ENCODE measurements at regions of chr5 and their contacts with region 1.

Region 1: DNA sequence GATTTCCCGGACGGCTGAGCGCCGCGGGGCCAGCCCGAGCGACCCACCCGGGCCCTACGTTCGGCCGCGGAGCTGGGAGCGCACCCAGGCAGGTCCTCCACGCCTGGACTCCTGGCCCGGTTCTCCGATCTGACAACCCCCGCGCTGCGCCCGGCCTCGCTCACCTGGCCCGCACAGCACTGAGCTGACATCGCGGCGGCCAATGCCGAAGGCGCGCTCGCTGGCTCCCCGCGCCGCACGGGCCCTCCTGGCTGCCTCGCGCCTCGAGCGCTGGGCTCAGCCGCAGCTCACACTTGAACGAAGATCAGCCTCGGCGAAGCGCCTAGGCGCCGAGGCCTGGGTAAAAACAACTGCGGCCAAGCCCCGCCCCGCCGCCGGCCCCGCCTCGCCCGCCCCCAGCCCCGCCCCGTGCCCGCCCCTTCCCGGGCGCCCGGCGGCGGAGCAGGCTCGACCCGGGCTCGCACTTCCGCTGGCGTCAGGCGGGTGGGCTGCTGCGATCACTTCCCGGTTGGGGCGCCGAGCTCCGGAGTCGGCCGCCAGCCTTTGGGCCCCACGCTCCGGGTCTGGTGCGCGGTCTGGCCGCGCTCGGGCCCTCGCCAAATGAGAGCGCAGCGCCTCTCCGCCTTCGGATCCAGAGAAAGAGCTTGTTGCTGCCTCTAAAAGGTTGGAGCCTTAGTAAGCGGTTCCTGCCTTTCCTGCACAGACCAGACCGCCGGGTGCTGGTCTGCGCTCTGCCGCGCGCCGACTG is at the start of gene SERINC5:
- DNase-seq: peak; percentile 79 to 89 (median 86)
- ATAC-seq: peak; percentile 91
- H3K4me3 ChIP-seq: peak within 1 kb of the TSS; percentile 73
- H3K4me3 Mint-ChIP-seq: peak within 1 kb of the TSS; percentile 92 to 99 (median 96)
- H3K27ac ChIP-seq: peak within 1 kb of the TSS; percentile 88
- H3K27ac Mint-ChIP-seq: peak within 1 kb of the TSS; percentile 94 to 99 (median 98)
- H3K4me1 ChIP-seq: peaks cover 19 to 30% of the 10 kb centered on the region in 2 donors
- H3K4me1 Mint-ChIP-seq: peaks cover 40 to 56% (median 46%) of the 10 kb centered on the region in 7 donors
- H3K27me3 ChIP-seq: no peaks in the 10 kb centered on the region
- H3K27me3 Mint-ChIP-seq: no peaks in the 10 kb centered on the region
- total RNA-seq, gene SERINC5: 71.2 to 164 (median 163) TPM

Region 2: GRCh38 chr5:78547731-78548615 is 1707.9 kb before region 1 on chr5:
- CTCF ChIA-PET with region 1: no interaction called
- POLR2A ChIA-PET with region 1: no interaction called
- intact Hi-C with region 1: no loop called
- DNase-seq: no peak
- ATAC-seq: no peak
- H3K4me3 ChIP-seq: no peak overlapping the region
- H3K4me3 Mint-ChIP-seq: no peak overlapping the region
- H3K27ac ChIP-seq: no peak overlapping the region
- H3K27ac Mint-ChIP-seq: no peak overlapping the region
- H3K4me1 ChIP-seq: no peaks in the 10 kb centered on the region
- H3K4me1 Mint-ChIP-seq: peaks cover 0 to 1% (median 0%) of the 10 kb centered on the region in 7 donors
- H3K27me3 ChIP-seq: no peaks in the 10 kb centered on the region
- H3K27me3 Mint-ChIP-seq: peaks cover 0 to 5% (median 0%) of the 10 kb centered on the region in 5 donors

Region 3: DNA sequence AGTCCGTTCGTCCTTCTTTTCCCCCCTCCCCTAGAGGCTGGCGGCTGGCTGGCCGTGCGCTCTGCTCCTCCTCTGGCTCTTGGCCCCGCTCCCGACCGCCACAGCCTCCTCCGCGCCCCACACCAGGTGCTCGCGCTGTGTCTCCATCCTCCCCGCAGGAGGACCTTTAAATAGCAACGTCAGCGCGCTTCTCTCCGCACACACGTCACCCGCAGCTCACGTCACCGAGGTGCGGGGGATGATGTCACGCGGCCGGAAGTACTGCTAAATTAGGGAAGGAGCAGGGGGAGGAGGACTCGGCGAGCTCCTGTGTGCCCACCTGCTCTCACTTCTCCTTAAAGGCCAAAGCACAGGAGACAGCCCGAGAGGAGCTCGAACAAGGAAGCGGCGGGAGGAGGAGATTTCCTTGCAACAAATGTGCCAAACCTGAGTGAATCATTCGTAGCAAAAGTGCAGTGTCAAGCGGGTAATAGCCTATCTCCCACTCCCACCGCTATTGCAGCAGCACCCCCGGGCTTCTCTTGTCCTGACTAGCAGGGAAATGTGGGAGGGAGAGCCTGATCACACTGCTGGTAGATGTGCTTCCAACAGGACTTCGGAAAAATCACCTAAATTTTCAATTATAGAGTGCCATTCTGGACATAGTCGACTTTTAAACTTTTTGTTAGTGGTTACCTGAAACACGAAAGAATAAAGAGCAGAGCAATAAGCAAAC is 741.4 kb before region 1 on chr5:
- CTCF ChIA-PET with region 1: no interaction called
- POLR2A ChIA-PET with region 1: no interaction called
- intact Hi-C with region 1: loop called in 1 of 2 experiments (anchors 2 kb)
- DNase-seq: peak; percentile 80 to 94 (median 91)
- ATAC-seq: peak; percentile 91
- H3K4me3 ChIP-seq: peak overlapping the region; percentile 71
- H3K4me3 Mint-ChIP-seq: peak overlapping the region; percentile 88 to 99 (median 98)
- H3K27ac ChIP-seq: peak overlapping the region; percentile 97
- H3K27ac Mint-ChIP-seq: peak overlapping the region; percentile 93 to 99 (median 98)
- H3K4me1 ChIP-seq: peaks cover 4 to 26% of the 10 kb centered on the region in 2 donors
- H3K4me1 Mint-ChIP-seq: peaks cover 6 to 53% (median 40%) of the 10 kb centered on the region in 7 donors
- H3K27me3 ChIP-seq: peaks cover 0 to 7% of the 10 kb centered on the region in 2 donors
- H3K27me3 Mint-ChIP-seq: peaks cover 0 to 27% (median 23%) of the 10 kb centered on the region in 5 donors

Region 4: GRCh38 chr5:80093796-80094195 is 162.1 kb before region 1 on chr5:
- CTCF ChIA-PET with region 1: interaction called, 10 read pairs
- POLR2A ChIA-PET with region 1: interaction called, 16 read pairs
- intact Hi-C with region 1: loop called in 1 of 2 experiments (anchors 1 kb)
- DNase-seq: no peak
- ATAC-seq: no peak
- H3K4me3 ChIP-seq: no peak overlapping the region
- H3K4me3 Mint-ChIP-seq: peak overlapping the region in 2 of 10 donors; percentile 3 to 5
- H3K27ac ChIP-seq: no peak overlapping the region
- H3K27ac Mint-ChIP-seq: peak overlapping the region in 3 of 9 donors; percentile 9 to 62 (median 54)
- H3K4me1 ChIP-seq: peaks cover 0 to 18% of the 10 kb centered on the region in 2 donors
- H3K4me1 Mint-ChIP-seq: peaks cover 15 to 53% (median 47%) of the 10 kb centered on the region in 7 donors
- H3K27me3 ChIP-seq: no peaks in the 10 kb centered on the region
- H3K27me3 Mint-ChIP-seq: peaks cover 0 to 4% (median 0%) of the 10 kb centered on the region in 5 donors

Region 5: GRCh38 chr5:80153586-80154126 is 102.2 kb before region 1 on chr5:
- CTCF ChIA-PET with region 1: interaction called, 3 read pairs
- POLR2A ChIA-PET with region 1: interaction called, 31 read pairs
- intact Hi-C with region 1: loop called in 1 of 2 experiments (anchors 1 kb)
- DNase-seq: peak in 7 of 9 donors; percentile 57 to 78 (median 69)
- ATAC-seq: peak; percentile 60
- H3K4me3 ChIP-seq: no peak overlapping the region
- H3K4me3 Mint-ChIP-seq: peak overlapping the region; percentile 48 to 88 (median 80)
- H3K27ac ChIP-seq: peak overlapping the region; percentile 78
- H3K27ac Mint-ChIP-seq: peak overlapping the region; percentile 85 to 100 (median 99)
- H3K4me1 ChIP-seq: peaks cover 9 to 49% of the 10 kb centered on the region in 2 donors
- H3K4me1 Mint-ChIP-seq: peaks cover 17 to 89% (median 72%) of the 10 kb centered on the region in 7 donors
- H3K27me3 ChIP-seq: no peaks in the 10 kb centered on the region
- H3K27me3 Mint-ChIP-seq: no peaks in the 10 kb centered on the region

Region 6: DNA sequence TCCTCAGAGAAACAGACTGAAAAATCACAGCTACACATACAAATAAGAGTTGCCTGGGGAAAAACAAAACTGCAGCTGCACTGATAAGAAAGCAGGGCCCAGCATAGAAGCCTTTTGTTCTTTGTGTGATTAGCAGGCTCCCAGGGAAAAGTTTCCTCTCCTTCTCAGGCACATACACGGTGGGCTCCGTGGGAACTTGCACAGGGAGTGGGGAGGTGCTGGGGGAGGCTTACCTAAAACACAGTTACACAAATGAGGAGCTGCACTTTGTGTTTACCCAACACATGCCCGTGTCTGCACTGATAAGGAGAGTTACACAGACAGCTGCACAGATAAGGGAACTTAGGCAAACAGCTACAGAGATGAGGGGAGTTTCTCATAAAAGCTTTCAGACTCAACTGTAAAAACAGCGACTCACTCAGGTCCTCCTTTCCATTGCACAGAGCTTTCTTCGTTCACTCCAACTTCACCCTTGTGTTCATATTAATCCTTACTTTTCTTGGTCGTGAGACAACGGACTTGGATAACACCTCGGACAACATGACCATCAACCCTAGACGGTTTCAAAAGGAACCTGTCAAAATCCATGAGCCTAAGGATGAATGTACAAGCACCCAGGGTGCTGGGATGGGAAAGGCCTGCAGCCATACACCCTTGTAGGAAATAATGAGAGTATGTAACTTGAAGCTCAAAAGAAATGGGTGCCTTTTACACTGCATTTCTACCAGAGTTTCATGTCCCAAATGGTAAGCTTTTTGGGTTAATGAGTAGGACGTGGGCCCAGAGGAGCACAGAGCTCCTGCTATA is 50.9 kb before region 1 on chr5:
- CTCF ChIA-PET with region 1: interaction called, 17 read pairs
- POLR2A ChIA-PET with region 1: interaction called, 31 read pairs
- intact Hi-C with region 1: no loop called
- DNase-seq: peak in 6 of 9 donors; percentile 44 to 59 (median 49)
- ATAC-seq: peak; percentile 88
- H3K4me3 ChIP-seq: no peak overlapping the region
- H3K4me3 Mint-ChIP-seq: peak overlapping the region in 9 of 10 donors; percentile 58 to 82 (median 73)
- H3K27ac ChIP-seq: peak overlapping the region; percentile 54
- H3K27ac Mint-ChIP-seq: peak overlapping the region; percentile 46 to 99 (median 90)
- H3K4me1 ChIP-seq: peaks cover 10 to 74% of the 10 kb centered on the region in 2 donors
- H3K4me1 Mint-ChIP-seq: peaks cover 45 to 99% (median 91%) of the 10 kb centered on the region in 7 donors
- H3K27me3 ChIP-seq: no peaks in the 10 kb centered on the region
- H3K27me3 Mint-ChIP-seq: no peaks in the 10 kb centered on the region

Region 7: DNA sequence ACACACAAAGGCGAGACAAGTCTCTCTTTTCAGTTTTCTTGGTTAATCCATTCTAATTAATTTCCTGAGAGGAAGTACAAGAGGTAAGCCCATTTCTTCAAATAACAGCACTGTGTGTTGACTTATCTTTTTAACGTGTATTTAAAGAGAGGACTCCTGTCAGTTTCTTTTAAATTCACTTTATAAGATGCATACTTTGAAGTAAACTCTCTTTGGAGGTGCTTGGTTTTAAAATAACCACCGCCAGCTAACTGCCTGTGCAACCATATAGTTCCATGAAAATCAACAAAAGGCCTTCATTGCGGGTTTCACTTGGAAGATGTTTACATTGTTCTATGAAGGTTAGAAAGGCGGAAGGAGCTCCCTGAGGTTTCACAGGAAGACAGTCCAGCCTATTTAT is 13.0 kb after region 1 on chr5:
- CTCF ChIA-PET with region 1: interaction called, 8 read pairs
- POLR2A ChIA-PET with region 1: interaction called, 153 read pairs
- intact Hi-C with region 1: loop called (anchors 1 kb)
- DNase-seq: peak in 3 of 9 donors; percentile 19 to 42 (median 32)
- ATAC-seq: peak; percentile 20
- H3K4me3 ChIP-seq: no peak overlapping the region
- H3K4me3 Mint-ChIP-seq: peak overlapping the region; percentile 56 to 83 (median 78)
- H3K27ac ChIP-seq: peak overlapping the region; percentile 58
- H3K27ac Mint-ChIP-seq: peak overlapping the region; percentile 93 to 100 (median 96)
- H3K4me1 ChIP-seq: peaks cover 6 to 37% of the 10 kb centered on the region in 2 donors
- H3K4me1 Mint-ChIP-seq: peaks cover 39 to 79% (median 62%) of the 10 kb centered on the region in 7 donors
- H3K27me3 ChIP-seq: no peaks in the 10 kb centered on the region
- H3K27me3 Mint-ChIP-seq: no peaks in the 10 kb centered on the region

Measured in naive thymus-derived CD4-positive, alpha-beta T cell (primary cell).